HepG2 (cell line): ENCODE measurements at regions of chr14 and their contacts with region 1.

Region 1: GRCh38 chr14:45134051-45134958 is at the start of gene FKBP3:
- DNase-seq: peak; percentile 99
- ATAC-seq: peak; percentile 90
- H3K4me3 ChIP-seq: peak within 1 kb of the TSS; percentile 87 to 95 (median 91)
- H3K27ac ChIP-seq: peak within 1 kb of the TSS; percentile 90
- H3K4me1 ChIP-seq: peaks cover 45% of the 10 kb centered on the region
- H3K27me3 ChIP-seq: no peaks in the 10 kb centered on the region; a peak in 2 of 5 replicates
- CTCF ChIP-seq: peak; percentile 60
- EP300 ChIP-seq: peak; percentile 5 to 14; a peak in 2 of 4 replicates
- POLR2A ChIP-seq: peak; percentile 83 to 89
- RAD21 ChIP-seq: 0 out of 2 replicates have a peak, but pooled peaks have one; percentile 22
- total RNA-seq, gene FKBP3: 87.6 and 140 TPM in 2 replicates

Region 2: GRCh38 chr14:44897045-44897844 is 237.1 kb before region 1 on chr14:
- CTCF ChIA-PET with region 1: no interaction called
- POLR2A ChIA-PET with region 1: interaction called, 11 read pairs
- in situ Hi-C with region 1: no loop called
- intact Hi-C with region 1: loop called (anchors 1 kb)
- DNase-seq: peak; percentile 94
- ATAC-seq: peak; percentile 94
- H3K4me3 ChIP-seq: peak overlapping the region; percentile 83 to 87 (median 87)
- H3K27ac ChIP-seq: peak overlapping the region; percentile 98
- H3K4me1 ChIP-seq: peaks cover 32% of the 10 kb centered on the region
- H3K27me3 ChIP-seq: no peaks in the 10 kb centered on the region
- CTCF ChIP-seq: no peak
- EP300 ChIP-seq: no peak
- POLR2A ChIP-seq: peak; percentile 86 to 88
- RAD21 ChIP-seq: peak; percentile 36; the same call in 1 of the 2 replicates

Region 3: GRCh38 chr14:44961604-44962333 is 172.5 kb before region 1 on chr14 and contains the starts of genes KLHL28 and TOGARAM1:
- CTCF ChIA-PET with region 1: no interaction called
- POLR2A ChIA-PET with region 1: interaction called, 42 read pairs
- in situ Hi-C with region 1: loop called (anchors 5 kb)
- intact Hi-C with region 1: loop called (anchors 1 kb)
- DNase-seq: peak; percentile 100
- ATAC-seq: peak; percentile 90
- H3K4me3 ChIP-seq: peak within 1 kb of the TSS; percentile 83 to 88 (median 84)
- H3K27ac ChIP-seq: peak within 1 kb of the TSS; percentile 84
- H3K4me1 ChIP-seq: peaks cover 34% of the 10 kb centered on the region
- H3K27me3 ChIP-seq: no peaks in the 10 kb centered on the region; a peak in 1 of 5 replicates
- CTCF ChIP-seq: no peak; the same call in 1 of the 2 replicates
- EP300 ChIP-seq: peak in 1 of 2 experiments; percentile 46; a peak in 2 of 4 replicates
- POLR2A ChIP-seq: peak; percentile 94 to 95
- RAD21 ChIP-seq: 0 out of 2 replicates have a peak, but pooled peaks have one; percentile 44
- total RNA-seq, gene KLHL28: 6.6 and 9.8 TPM in 2 replicates
- total RNA-seq, gene TOGARAM1: 9.8 and 10.6 TPM in 2 replicates

Region 4: DNA sequence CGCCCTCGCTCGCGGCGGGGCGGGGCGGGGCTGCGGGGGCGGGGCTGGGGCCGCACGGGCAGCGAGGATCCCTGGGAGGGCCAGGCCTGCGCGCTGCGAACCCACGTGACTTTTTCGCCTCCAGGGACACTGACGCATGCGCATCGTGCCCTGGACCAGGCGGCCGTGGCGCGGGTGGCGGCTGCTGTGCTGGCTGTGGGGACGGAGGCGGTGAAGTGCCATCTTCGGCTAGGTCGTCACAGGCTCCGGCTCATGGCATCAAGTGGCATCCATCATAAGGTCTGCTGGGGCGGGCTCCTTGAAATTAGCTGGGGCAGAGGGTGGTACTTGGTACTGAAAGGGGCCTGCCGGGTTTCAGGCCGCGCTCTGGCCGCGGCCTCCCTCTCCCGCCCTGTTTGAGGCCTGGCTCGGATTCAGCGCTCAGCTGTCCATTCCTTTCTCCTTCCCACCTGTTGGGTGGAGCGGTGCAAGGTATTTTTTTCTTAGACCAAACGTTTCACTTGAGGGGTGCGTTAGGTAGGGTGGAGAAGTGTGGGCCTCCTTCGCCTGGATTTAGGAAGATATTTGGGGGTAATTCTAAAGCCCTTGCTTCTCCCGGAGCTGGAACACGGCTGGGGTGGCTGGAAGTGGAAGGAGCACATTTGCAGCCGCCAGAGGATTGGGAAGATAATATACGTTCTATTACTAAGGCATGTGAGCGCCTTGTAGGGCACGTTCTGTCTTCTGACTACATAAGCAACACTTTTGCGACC is 50.2 kb before region 1 on chr14 and contains the start of gene PRPF39:
- CTCF ChIA-PET with region 1: no interaction called
- POLR2A ChIA-PET with region 1: interaction called, 5 read pairs
- in situ Hi-C with region 1: no loop called
- intact Hi-C with region 1: loop called (anchors 2 kb)
- DNase-seq: peak; percentile 87
- ATAC-seq: peak; percentile 92
- H3K4me3 ChIP-seq: peak within 1 kb of the TSS; percentile 81 to 91 (median 90)
- H3K27ac ChIP-seq: peak within 1 kb of the TSS; percentile 77
- H3K4me1 ChIP-seq: peaks cover 62% of the 10 kb centered on the region
- H3K27me3 ChIP-seq: no peaks in the 10 kb centered on the region
- CTCF ChIP-seq: 0 out of 2 replicates have a peak, but pooled peaks have one; percentile 9
- EP300 ChIP-seq: no peak
- POLR2A ChIP-seq: peak; percentile 92 to 98
- RAD21 ChIP-seq: peak; percentile 53
- total RNA-seq, gene PRPF39: 28.8 and 44.2 TPM in 2 replicates

Region 5: GRCh38 chr14:45185100-45185814 is 51.0 kb after region 1 on chr14:
- CTCF ChIA-PET with region 1: no interaction called
- POLR2A ChIA-PET with region 1: no interaction called
- in situ Hi-C with region 1: no loop called
- intact Hi-C with region 1: no loop called
- DNase-seq: no peak
- ATAC-seq: no peak
- H3K4me3 ChIP-seq: no peak overlapping the region
- H3K27ac ChIP-seq: no peak overlapping the region
- H3K4me1 ChIP-seq: no peaks in the 10 kb centered on the region
- H3K27me3 ChIP-seq: no peaks in the 10 kb centered on the region
- CTCF ChIP-seq: no peak
- EP300 ChIP-seq: no peak
- POLR2A ChIP-seq: no peak
- RAD21 ChIP-seq: no peak

Region 6: GRCh38 chr14:45222485-45223262 is 88.4 kb after region 1 on chr14:
- CTCF ChIA-PET with region 1: no interaction called
- POLR2A ChIA-PET with region 1: no interaction called
- in situ Hi-C with region 1: no loop called
- intact Hi-C with region 1: no loop called
- DNase-seq: no peak
- ATAC-seq: no peak
- H3K4me3 ChIP-seq: no peak overlapping the region
- H3K27ac ChIP-seq: no peak overlapping the region
- H3K4me1 ChIP-seq: peaks cover under 1% of the 10 kb centered on the region; the same call in 1 of the 2 replicates
- H3K27me3 ChIP-seq: no peaks in the 10 kb centered on the region; a peak in 1 of 5 replicates
- CTCF ChIP-seq: no peak
- EP300 ChIP-seq: no peak
- POLR2A ChIP-seq: no peak
- RAD21 ChIP-seq: no peak

Region 7: DNA sequence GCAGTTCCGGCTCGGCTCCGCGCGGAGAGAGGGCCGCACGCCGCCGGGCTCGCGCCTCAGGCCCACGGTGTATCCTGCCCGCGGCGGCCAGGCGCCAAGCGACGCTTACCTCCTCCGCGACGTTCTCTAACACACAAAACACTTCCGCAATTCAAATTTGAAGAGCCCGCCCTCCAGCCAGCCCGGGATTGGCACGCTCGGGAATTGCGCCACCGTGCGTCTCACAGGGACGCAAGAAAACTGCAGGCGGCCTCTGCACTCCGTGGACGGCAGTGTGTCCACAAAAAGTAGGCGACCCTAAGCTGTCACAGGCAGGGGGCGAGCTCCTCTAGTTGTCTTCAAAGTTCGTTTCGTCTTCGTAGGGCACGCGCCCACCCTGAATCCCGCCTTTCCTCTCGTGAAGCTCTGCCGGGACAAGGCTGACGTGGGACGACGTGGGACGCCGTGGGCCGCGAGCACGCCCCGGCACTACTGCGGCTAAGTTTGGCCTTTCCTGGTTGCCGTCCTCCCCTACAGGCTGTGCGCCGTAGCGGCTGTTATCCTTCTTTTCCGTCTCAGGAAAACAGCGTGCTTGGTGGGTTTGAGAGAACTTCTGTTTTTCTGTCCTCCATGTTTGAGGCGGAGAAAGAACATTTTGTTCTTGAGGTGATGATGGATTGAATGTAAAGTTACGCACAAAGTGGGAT is 118.9 kb after region 1 on chr14 and contains the start of gene MIS18BP1:
- CTCF ChIA-PET with region 1: no interaction called
- POLR2A ChIA-PET with region 1: interaction called, 9 read pairs
- in situ Hi-C with region 1: no loop called
- intact Hi-C with region 1: loop called (anchors 1 kb)
- DNase-seq: peak; percentile 96
- ATAC-seq: peak; percentile 95
- H3K4me3 ChIP-seq: peak within 1 kb of the TSS; percentile 89 to 100 (median 91)
- H3K27ac ChIP-seq: peak within 1 kb of the TSS; percentile 97
- H3K4me1 ChIP-seq: peaks cover 36% of the 10 kb centered on the region
- H3K27me3 ChIP-seq: no peaks in the 10 kb centered on the region; a peak in 1 of 5 replicates
- CTCF ChIP-seq: peak; percentile 87
- EP300 ChIP-seq: peak; percentile 7 to 26; a peak in 2 of 4 replicates
- POLR2A ChIP-seq: peak; percentile 64 to 78
- RAD21 ChIP-seq: no peak; the same call in none of the 2 replicates
- total RNA-seq, gene MIS18BP1: 36.4 and 54.6 TPM in 2 replicates